Spleen (tissue), 13 donors: ENCODE measurements at regions of chr6 and their contacts with region 1.

Region 1: GRCh38 chr6:13711733-13712598 is at the start of gene RANBP9:
- DNase-seq: peak; percentile 98
- H3K4me3 ChIP-seq: peak within 1 kb of the TSS; percentile 70 to 84 (median 74)
- H3K27ac ChIP-seq: peak within 1 kb of the TSS; percentile 92 to 99 (median 96)
- H3K4me1 ChIP-seq: peaks cover 18 to 52% (median 42%) of the 10 kb centered on the region in 6 donors
- H3K27me3 ChIP-seq: no peaks in the 10 kb centered on the region
- CTCF ChIP-seq: no peak
- POLR2A ChIP-seq: peak in 2 of 3 donors; percentile 25 to 29
- total RNA-seq, gene RANBP9: 32.1 to 41.8 (median 37.4) TPM

Region 2: GRCh38 chr6:13614926-13615798 is 96.8 kb before region 1 on chr6 and contains the start of gene NOL7:
- intact Hi-C with region 1: loop called (anchors 5 kb)
- DNase-seq: peak; percentile 99
- H3K4me3 ChIP-seq: peak within 1 kb of the TSS; percentile 72 to 96 (median 90)
- H3K27ac ChIP-seq: peak within 1 kb of the TSS; percentile 83 to 96 (median 94)
- H3K4me1 ChIP-seq: peaks cover 14 to 57% (median 43%) of the 10 kb centered on the region in 6 donors
- H3K27me3 ChIP-seq: no peaks in the 10 kb centered on the region
- CTCF ChIP-seq: peak; percentile 93 to 100 (median 98)
- POLR2A ChIP-seq: peak; percentile 52 to 92 (median 87)
- total RNA-seq, gene NOL7: 44.6 to 73.6 (median 50.6) TPM